ENCODE measurements at regions of chr5 and their contacts with region 1.

Region 1: DNA sequence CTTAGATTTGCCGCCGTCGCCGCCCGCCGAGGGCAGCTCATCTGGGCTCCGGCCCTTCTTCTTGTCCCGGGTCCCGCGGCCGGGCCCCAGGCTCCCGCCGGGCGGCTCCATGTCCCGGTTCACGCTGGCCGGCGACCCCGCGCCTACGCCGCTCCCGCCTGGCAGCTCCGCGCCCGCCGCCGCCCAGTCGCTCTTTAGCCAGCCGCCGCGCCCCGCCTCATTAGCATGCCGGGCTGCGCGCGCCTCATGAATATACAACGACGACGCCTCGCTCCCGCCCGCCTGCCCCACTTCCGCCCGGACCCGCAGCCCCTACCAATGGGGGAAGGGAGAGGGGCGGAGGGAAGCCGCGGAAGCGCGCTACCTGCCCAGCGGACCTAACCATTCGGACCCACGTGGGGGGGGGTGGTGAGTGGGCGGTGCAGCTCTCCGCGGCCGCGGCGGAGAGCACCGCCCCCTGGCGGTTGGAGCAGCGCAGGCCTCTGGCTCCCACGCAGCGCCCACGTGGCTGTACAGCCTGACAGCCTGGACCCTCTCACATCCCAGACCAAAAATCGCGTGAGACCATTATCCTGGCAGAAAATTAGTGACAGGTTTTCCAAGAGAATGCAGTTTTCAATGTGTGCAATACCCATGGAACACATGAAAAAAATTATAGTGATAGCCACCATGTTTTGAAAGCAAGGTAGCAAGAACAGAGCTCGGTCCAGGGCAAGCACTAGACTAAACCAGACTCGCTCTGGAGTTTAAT is at the start of gene DIAPH1:
- DNase-seq: peak; percentile 99
- H3K4me3 Mint-ChIP-seq: peak within 1 kb of the TSS; percentile 98
- H3K27ac Mint-ChIP-seq: peak within 1 kb of the TSS; percentile 99
- H3K4me1 Mint-ChIP-seq: peaks cover 60% of the 10 kb centered on the region
- H3K27me3 Mint-ChIP-seq: no peaks in the 10 kb centered on the region
- total RNA-seq, gene DIAPH1: 165 to 169 TPM

Region 2: DNA sequence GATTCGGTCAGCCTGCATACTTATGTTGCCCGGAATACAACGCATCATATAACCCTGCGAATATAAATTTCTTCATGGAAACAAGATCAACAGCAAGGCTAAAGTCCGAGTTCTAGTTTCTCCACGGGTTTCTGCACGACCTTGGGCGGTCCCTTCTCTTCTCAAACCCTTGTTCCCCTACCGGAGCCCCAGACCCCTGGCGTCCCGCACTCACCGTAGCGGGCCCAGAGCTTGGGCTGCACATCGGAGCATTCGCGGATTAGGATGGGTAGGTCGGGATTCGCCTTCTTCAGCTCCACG is 972.0 kb before region 1 on chr5:
- CTCF ChIA-PET with region 1: no interaction called
- intact Hi-C with region 1: loop called (anchors 5 kb)
- DNase-seq: no peak
- H3K4me3 Mint-ChIP-seq: peak overlapping the region; percentile 100
- H3K27ac Mint-ChIP-seq: peak overlapping the region; percentile 99
- H3K4me1 Mint-ChIP-seq: peaks cover 40% of the 10 kb centered on the region
- H3K27me3 Mint-ChIP-seq: no peaks in the 10 kb centered on the region

Region 3: DNA sequence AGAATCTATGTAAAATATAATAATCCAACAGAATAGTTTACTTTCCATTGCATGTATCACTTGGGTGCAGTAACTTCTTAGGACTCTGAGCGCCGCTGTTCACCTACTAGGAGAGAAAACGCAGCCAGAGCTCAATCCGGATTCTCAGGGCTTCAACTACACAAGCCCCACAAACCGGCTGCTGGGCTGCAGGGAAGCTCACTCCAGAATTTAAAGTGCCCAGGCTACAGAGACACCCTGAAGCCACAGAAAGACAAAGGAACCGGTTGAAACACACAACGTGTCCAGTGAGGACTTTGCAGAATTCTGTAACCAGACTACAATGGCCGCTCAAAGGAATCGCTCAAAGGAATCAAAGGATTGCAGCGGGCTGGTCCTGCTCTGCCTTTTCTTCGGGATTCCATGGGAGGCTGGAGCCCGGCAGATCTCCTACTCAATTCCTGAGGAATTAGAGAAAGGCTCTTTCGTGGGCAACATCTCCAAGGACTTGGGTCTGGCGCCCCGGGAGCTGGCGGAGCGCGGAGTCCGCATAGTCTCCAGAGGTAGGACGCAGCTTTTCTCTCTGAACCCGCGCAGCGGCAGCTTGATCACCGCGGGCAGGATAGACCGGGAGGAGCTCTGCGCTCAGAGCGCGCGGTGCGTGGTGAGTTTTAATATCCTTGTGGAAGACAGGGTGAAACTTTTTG is 206.0 kb before region 1 on chr5 and contains the start of gene PCDHGA10:
- CTCF ChIA-PET with region 1: no interaction called
- intact Hi-C with region 1: loop called (anchors 5 kb)
- DNase-seq: peak; percentile 73
- H3K4me3 Mint-ChIP-seq: peak within 1 kb of the TSS; percentile 78
- H3K27ac Mint-ChIP-seq: no peak within 1 kb of the TSS
- H3K4me1 Mint-ChIP-seq: peaks cover 16% of the 10 kb centered on the region
- H3K27me3 Mint-ChIP-seq: peaks cover 69% of the 10 kb centered on the region
- total RNA-seq, gene PCDHGA10: 0.05 TPM in 1 of 2 experiments, not detected in the other

Region 4: DNA sequence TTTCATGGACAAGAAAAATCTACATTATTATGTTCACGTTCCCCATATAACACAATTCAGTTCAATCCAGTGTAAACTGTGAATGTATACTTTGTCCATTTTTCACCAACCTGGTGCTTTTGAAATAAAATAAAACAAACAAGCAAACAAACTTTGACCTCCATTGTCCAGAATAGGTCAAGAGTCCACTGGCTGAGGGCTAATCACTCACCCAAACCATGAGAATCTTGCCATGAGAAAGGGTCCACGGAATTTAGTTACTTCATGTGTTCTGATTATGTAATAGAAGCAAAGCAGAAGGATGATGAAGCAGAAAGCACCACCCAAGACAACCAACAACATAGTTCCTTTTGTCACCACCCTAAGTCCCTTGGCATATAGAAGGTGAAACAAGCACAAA is 28.9 kb before region 1 on chr5:
- CTCF ChIA-PET with region 1: interaction called, 197 read pairs
- intact Hi-C with region 1: loop called (anchors 1 kb)
- DNase-seq: no peak
- H3K4me3 Mint-ChIP-seq: no peak overlapping the region
- H3K27ac Mint-ChIP-seq: no peak overlapping the region
- H3K4me1 Mint-ChIP-seq: peaks cover 36% of the 10 kb centered on the region
- H3K27me3 Mint-ChIP-seq: no peaks in the 10 kb centered on the region

Region 5: DNA sequence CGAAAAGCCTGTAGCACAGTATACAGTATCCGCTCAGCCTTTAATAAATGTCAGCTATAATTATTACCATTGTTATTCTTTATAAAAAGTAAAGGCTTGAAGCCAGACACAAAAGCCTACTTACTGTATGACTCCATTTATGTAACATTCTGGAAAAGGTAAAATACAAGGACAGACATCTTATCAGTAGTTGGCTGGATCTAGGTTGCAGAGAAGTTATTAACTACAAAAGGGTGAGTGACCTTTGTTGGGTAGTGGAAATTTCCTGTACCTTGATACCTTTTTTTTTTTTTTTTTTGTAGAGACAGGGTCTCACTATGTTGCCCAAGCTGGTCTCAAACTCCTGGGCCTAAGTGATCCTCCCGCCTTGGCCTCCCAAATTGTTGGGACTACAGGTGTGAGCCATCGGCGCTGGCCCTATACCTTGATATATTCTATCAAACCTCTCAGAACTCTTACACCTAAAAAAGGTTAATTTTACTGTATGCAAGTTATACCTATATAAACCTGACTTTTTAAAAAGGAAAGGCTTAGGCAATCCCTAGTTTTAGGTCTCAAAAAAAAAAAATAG is 11.7 kb after region 1 on chr5:
- CTCF ChIA-PET with region 1: interaction called, 36 read pairs
- intact Hi-C with region 1: no loop called
- DNase-seq: no peak
- H3K4me3 Mint-ChIP-seq: no peak overlapping the region
- H3K27ac Mint-ChIP-seq: no peak overlapping the region
- H3K4me1 Mint-ChIP-seq: peaks cover 21% of the 10 kb centered on the region
- H3K27me3 Mint-ChIP-seq: no peaks in the 10 kb centered on the region

Region 6: GRCh38 chr5:141878711-141879425 is 259.9 kb after region 1 on chr5:
- CTCF ChIA-PET with region 1: no interaction called
- intact Hi-C with region 1: no loop called
- DNase-seq: peak; percentile 96
- H3K4me3 Mint-ChIP-seq: peak overlapping the region; percentile 65
- H3K27ac Mint-ChIP-seq: no peak overlapping the region
- H3K4me1 Mint-ChIP-seq: peaks cover 19% of the 10 kb centered on the region
- H3K27me3 Mint-ChIP-seq: peaks cover 62% of the 10 kb centered on the region

Region 7: GRCh38 chr5:141889282-141889871 is 270.4 kb after region 1 on chr5:
- CTCF ChIA-PET with region 1: no interaction called
- intact Hi-C with region 1: no loop called
- DNase-seq: peak; percentile 29
- H3K4me3 Mint-ChIP-seq: no peak overlapping the region
- H3K27ac Mint-ChIP-seq: no peak overlapping the region
- H3K4me1 Mint-ChIP-seq: no peaks in the 10 kb centered on the region
- H3K27me3 Mint-ChIP-seq: peaks cover 24% of the 10 kb centered on the region